H1 (cell line): ENCODE measurements at regions of chr9 and their contacts with region 1.

Region 1: DNA sequence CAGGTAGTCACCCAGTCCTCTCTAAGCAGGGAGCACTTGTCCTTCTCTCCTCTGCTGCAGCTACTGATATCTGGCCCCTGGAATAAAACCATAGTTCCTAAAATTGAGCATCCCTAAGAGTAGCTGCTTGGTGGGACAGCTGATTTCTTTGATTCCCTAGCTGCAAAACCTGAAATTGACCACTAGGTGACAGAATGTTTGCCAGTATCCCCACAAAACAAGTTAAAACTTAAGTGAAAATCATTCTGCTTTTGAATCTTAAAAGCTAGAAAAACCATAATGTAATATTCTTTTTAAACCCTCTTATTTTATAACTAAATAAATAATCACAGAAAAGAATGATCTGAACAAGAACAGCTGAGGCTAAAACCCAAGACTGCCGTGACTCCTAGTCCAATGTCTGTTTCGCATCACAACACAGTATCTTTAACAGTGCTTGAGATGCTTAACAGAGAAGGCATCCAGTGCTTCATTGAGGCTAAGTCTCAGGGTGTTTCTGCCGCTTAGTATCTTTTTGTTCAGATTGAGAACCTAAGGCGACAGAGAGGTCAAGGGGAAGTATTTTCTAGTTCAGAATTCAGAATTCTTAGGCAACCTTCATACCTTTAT is 24.4 kb upstream of the TAL2 start:
- DNase-seq: no peak
- H3K4me3 ChIP-seq: no peak overlapping the region
- H3K27ac ChIP-seq: no peak overlapping the region
- H3K4me1 ChIP-seq: no peaks in the 10 kb centered on the region
- H3K27me3 ChIP-seq: no peaks in the 10 kb centered on the region
- CTCF ChIP-seq: peak in 2 of 3 experiments; percentile 42 to 66; a peak in 2 of 4 replicates
- EP300 ChIP-seq: no peak
- POLR2A ChIP-seq: no peak
- RAD21 ChIP-seq: peak; percentile 36 to 53; a peak in 3 of 4 replicates

Region 2: GRCh38 chr9:105621001-105621400 is 16.9 kb before region 1 on chr9:
- CTCF ChIA-PET with region 1: interaction called, 70 read pairs
- POLR2A ChIA-PET with region 1: no interaction called
- DNase-seq: no peak
- H3K4me3 ChIP-seq: no peak overlapping the region
- H3K27ac ChIP-seq: no peak overlapping the region
- H3K4me1 ChIP-seq: no peaks in the 10 kb centered on the region
- H3K27me3 ChIP-seq: no peaks in the 10 kb centered on the region
- CTCF ChIP-seq: no peak
- EP300 ChIP-seq: no peak
- POLR2A ChIP-seq: no peak
- RAD21 ChIP-seq: no peak

Region 3: GRCh38 chr9:105712773-105713172 is 74.9 kb after region 1 on chr9:
- CTCF ChIA-PET with region 1: interaction called, 15 read pairs
- POLR2A ChIA-PET with region 1: no interaction called
- DNase-seq: no peak
- H3K4me3 ChIP-seq: no peak overlapping the region
- H3K27ac ChIP-seq: no peak overlapping the region
- H3K4me1 ChIP-seq: no peaks in the 10 kb centered on the region
- H3K27me3 ChIP-seq: no peaks in the 10 kb centered on the region
- CTCF ChIP-seq: no peak
- EP300 ChIP-seq: no peak
- POLR2A ChIP-seq: no peak
- RAD21 ChIP-seq: no peak